Calu3 (cell line): ENCODE measurements at regions of chr7 and their contacts with region 1.

Region 1: DNA sequence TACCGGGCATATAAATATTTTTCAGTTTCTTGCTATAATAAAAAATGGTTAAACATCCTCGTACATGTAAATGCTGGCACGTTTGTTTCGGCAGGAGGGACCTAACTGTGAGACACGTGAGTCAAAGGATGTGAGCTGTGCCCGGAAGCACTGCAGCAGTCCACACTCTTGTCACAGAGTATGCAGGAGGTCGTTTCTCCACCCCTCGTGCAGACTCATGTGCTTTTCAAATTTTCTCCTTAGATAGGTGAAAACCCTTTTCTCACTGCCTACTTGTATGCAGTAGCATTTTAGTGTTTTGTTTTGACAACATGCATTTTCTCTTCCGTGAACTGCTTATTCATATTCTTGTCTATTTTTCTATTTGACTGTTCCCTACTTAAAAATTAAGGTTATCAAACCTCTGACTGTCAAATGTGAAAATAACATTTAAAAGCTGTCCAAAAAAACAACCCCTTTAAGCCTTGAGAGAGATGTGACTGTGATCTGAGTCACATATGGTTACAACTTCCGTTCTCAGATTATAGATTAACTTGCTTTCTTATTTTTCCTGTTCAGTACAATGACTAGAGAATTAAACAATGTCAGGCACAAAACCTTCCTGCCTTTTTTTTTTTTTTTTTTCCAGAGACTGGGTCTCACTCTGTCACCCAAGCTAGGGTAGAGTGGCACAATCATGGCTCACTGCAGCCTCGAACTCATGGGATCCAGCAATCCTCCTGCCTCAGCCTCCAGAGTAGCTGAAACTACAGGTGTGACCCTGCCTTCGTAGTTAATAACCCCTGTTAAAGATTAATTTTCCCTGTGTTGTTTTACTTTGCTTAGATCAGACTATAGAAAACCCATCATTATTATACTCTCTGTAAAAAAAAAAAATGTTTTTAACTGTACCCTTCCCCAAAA is 45.1 kb downstream of the DPY19L1 start:
- DNase-seq: peak; percentile 64
- H3K4me3 Mint-ChIP-seq: peak overlapping the region; percentile 59
- H3K27ac Mint-ChIP-seq: peak overlapping the region; percentile 95
- H3K4me1 Mint-ChIP-seq: peaks cover 51% of the 10 kb centered on the region
- H3K27me3 Mint-ChIP-seq: no peaks in the 10 kb centered on the region
- CTCF ChIP-seq: no peak

Region 2: DNA sequence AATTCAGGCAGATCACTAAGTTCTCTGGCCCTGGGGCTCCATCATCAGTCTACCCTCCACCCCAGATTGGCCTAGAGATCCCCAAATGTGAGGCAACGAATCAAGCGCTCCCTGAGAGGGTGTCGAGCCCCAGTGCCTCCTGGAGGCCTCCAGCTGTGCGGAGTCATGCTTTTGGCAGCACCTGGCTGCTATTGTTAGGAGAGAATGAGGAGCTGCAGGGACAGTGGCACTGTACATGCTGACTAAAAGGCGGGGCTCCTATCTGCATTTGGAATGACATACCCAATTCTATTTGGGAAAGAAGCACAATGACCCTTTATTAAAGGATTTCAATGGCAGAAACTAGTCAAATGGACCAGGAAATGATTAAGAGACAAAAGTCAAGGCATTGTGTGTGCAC is 116.7 kb before region 1 on chr7:
- CTCF ChIA-PET with region 1: no interaction called
- intact Hi-C with region 1: no loop called
- DNase-seq: no peak
- H3K4me3 Mint-ChIP-seq: no peak overlapping the region
- H3K27ac Mint-ChIP-seq: no peak overlapping the region
- H3K4me1 Mint-ChIP-seq: peaks cover under 1% of the 10 kb centered on the region
- H3K27me3 Mint-ChIP-seq: no peaks in the 10 kb centered on the region
- CTCF ChIP-seq: no peak

Region 3: DNA sequence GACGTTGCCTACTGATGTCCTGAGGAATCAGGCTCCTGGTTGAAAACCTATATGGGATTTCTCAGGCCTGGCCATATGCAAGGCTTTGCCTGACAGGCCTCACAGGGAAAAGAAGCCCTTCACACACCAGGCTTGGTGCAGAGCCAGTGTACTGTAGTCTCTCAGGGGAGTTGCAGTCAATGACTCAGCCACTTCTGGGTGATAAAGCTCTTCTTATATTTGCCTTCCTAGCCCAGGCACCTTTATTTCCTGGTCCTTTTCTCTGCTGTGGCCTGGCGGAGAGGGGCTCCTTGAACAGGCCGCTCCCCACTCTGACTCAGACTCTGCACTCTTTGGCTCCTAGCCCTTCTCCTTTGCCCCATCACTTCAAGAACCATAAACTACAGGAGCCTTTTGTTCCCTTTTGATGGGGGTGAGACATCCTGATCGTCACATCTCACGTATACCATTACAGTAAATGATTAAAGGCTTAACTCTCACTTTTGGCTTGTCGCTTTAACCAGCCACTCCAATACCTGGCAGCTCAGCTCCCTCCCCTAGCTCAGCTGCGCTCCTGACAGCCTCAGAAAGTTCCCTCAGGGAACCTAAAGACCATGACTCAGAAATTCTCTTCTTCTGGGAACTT is 11.6 kb after region 1 on chr7:
- CTCF ChIA-PET with region 1: interaction called, 15 read pairs
- intact Hi-C with region 1: no loop called
- DNase-seq: peak; percentile 96
- H3K4me3 Mint-ChIP-seq: peak overlapping the region; percentile 43
- H3K27ac Mint-ChIP-seq: peak overlapping the region; percentile 93
- H3K4me1 Mint-ChIP-seq: peaks cover 93% of the 10 kb centered on the region
- H3K27me3 Mint-ChIP-seq: no peaks in the 10 kb centered on the region
- CTCF ChIP-seq: no peak